ENCODE measurements at regions of chr17 and their contacts with region 1.

Region 1: GRCh38 chr17:29777663-29778062 is 152.4 kb downstream of the SSH2 start:
- DNase-seq: no peak
- ATAC-seq: no peak
- H3K4me3 ChIP-seq: no peak overlapping the region
- H3K27ac ChIP-seq: no peak overlapping the region
- H3K4me1 ChIP-seq: no peaks in the 10 kb centered on the region; the same call in 2 of the 3 replicates
- CTCF ChIP-seq: no peak
- EP300 ChIP-seq: no peak
- POLR2A ChIP-seq: no peak
- RAD21 ChIP-seq: no peak

Region 2: DNA sequence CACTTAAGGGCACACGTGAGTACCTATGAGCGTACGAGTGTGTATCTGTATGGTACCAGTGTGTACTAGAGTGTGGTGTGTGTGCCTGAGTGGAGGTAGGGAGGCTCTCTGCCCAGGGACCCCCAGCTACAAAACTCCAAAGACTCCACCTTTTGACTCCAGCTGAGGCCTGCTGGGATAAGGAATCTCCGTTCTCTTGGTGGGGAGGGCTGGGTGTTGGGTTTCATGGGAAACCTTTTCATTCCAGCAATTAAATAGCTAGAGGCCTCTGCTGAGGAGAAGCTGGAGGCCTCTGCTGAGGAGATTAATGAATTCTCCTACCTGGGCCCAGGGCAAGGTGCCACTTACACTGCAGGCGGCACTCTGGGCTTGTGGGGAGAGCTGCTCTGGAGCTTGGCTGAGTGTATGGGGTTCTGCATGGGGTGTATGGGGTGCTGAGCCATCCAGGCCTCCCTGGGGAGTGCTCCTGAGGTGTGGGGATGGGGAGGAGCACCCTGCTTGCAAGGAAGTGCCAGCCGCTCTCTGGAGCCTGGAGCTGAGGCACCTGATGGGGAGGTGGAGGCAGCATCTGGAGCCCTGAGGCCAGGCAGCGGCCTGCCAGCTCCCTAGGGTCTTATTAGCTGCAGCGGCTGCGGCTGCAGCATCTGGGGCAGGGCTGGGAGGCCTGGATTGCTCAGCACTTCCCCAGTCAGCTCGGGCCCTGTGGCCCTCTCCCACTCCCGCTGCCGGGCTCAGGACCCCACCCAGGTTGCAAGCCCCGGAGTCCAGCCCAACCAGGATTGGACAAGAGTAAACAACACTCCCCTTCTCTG is 180.1 kb before region 1 on chr17:
- CTCF ChIA-PET with region 1: interaction called, 20 read pairs
- POLR2A ChIA-PET with region 1: no interaction called
- DNase-seq: no peak
- ATAC-seq: no peak
- H3K4me3 ChIP-seq: no peak overlapping the region
- H3K27ac ChIP-seq: no peak overlapping the region
- H3K4me1 ChIP-seq: peaks cover 19% of the 10 kb centered on the region
- CTCF ChIP-seq: no peak
- EP300 ChIP-seq: no peak
- POLR2A ChIP-seq: no peak
- RAD21 ChIP-seq: no peak

Region 3: DNA sequence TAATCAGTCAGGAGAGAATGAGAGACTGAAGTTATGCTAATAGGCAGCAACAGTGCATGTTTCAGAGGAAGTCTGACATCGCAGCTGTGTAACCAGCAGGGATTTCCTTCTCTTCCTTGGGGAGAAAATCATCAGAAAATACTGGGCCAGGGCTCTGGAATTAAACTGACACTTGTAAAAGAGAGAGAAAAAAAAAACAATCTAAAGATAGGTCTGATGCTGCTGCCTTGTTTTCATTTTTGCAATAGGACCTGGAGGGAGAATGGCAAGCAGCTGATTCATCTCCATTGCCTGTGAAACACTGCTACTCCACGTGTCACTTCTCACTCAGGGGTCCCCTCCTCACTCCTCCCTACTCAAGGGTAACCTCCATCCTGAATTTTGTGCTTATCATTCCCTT is 137.2 kb before region 1 on chr17:
- CTCF ChIA-PET with region 1: interaction called, 222 read pairs
- POLR2A ChIA-PET with region 1: interaction called, 18 read pairs
- DNase-seq: no peak
- ATAC-seq: no peak
- H3K4me3 ChIP-seq: no peak overlapping the region
- H3K27ac ChIP-seq: peak overlapping the region; percentile 10 to 82; a peak in 3 of 6 replicates
- H3K4me1 ChIP-seq: peaks cover 47% of the 10 kb centered on the region
- CTCF ChIP-seq: no peak
- EP300 ChIP-seq: no peak
- POLR2A ChIP-seq: no peak
- RAD21 ChIP-seq: no peak

Region 4: GRCh38 chr17:29699283-29699682 is 78.4 kb before region 1 on chr17:
- CTCF ChIA-PET with region 1: interaction called, 16 read pairs
- POLR2A ChIA-PET with region 1: no interaction called
- DNase-seq: no peak
- ATAC-seq: no peak
- H3K4me3 ChIP-seq: no peak overlapping the region
- H3K27ac ChIP-seq: no peak overlapping the region
- H3K4me1 ChIP-seq: no peaks in the 10 kb centered on the region
- CTCF ChIP-seq: no peak
- EP300 ChIP-seq: no peak
- POLR2A ChIP-seq: no peak
- RAD21 ChIP-seq: no peak

Region 5: DNA sequence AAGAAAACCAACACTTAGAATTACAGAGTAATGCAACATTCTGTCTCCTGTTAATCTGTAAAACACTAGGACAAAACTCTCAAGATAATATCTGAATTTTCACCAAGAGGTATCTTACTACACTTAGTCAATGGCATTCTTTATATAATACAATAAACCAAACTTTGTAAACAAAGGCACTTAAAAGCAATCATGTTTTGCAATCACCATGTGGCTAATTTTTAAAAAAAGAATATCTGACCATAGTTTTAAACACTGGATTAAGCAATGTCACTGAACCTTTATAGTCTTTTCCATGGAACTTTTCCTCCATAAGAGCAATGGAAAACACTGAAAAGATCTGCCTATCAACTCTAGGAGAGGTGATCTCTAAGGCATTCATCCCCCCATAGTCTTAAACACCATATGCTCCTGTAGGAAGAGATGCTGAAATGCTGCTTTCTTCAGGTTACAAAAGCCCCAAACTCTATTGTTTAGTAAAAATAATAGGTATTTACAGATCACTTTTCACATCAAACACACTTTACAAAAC is 10.8 kb before region 1 on chr17:
- CTCF ChIA-PET with region 1: interaction called, 32 read pairs
- POLR2A ChIA-PET with region 1: interaction called, 7 read pairs
- DNase-seq: no peak
- ATAC-seq: no peak
- H3K4me3 ChIP-seq: no peak overlapping the region
- H3K27ac ChIP-seq: no peak overlapping the region
- H3K4me1 ChIP-seq: peaks cover 7% of the 10 kb centered on the region; the same call in 1 of the 3 replicates
- CTCF ChIP-seq: no peak
- EP300 ChIP-seq: no peak
- POLR2A ChIP-seq: no peak
- RAD21 ChIP-seq: no peak

Region 6: DNA sequence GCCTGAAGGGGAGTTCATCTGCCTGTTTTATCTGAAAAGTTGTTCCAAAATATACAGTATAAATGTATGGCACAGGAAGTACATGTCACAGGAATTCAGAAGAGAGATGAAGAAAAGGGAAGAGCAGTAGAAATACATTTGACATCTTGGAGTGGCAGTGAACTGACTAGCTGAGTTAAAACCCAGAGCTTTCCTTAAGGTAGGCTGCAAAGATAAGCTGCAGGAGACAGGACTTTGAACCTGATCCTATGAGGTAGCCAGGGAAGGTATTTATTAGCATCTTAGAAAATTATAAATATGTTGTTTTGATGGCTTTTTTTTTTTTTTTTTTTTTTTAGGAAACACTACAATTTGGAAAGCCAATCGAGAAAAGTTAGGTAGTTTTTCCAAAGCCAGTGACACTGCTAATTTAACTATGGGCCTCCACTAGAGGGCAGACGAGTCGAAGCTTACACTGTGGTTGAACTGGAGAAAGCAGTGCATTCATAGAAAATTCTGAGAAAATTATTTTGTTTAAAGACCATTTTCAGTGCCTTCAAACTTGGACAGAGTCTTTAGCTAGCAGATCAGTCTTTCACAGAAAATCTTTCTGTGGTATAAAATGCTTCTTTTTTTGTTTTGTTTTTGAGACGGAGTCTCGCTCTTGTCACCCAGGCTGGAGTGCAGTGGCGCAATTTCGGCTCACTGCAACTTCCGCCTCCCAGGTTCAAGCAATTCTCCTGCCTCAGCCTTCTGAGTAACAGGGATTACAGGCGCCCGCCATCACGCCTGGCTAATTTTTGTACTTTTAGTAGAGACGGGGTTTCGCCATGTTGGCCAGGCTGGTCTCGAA is 30.1 kb after region 1 on chr17:
- CTCF ChIA-PET with region 1: interaction called, 32 read pairs
- POLR2A ChIA-PET with region 1: no interaction called
- DNase-seq: peak; percentile 72 to 73
- ATAC-seq: peak; percentile 90 to 94
- H3K4me3 ChIP-seq: peak overlapping the region; percentile 47
- H3K27ac ChIP-seq: peak overlapping the region; percentile 62 to 78
- H3K4me1 ChIP-seq: no peaks in the 10 kb centered on the region
- CTCF ChIP-seq: peak; percentile 99
- EP300 ChIP-seq: no peak
- POLR2A ChIP-seq: no peak
- RAD21 ChIP-seq: peak; percentile 92 to 93